ENCODE measurements at regions of chr5 and their contacts with region 1.

Region 1: GRCh38 chr5:43484106-43484849 is 613 bp upstream of the TMEM267 start:
- DNase-seq: peak; percentile 92
- ATAC-seq: peak; percentile 73
- H3K4me3 Mint-ChIP-seq: peak overlapping the region; percentile 97
- H3K27ac Mint-ChIP-seq: peak overlapping the region; percentile 100
- H3K4me1 Mint-ChIP-seq: peaks cover 37% of the 10 kb centered on the region
- H3K27me3 Mint-ChIP-seq: no peaks in the 10 kb centered on the region

Region 2: DNA sequence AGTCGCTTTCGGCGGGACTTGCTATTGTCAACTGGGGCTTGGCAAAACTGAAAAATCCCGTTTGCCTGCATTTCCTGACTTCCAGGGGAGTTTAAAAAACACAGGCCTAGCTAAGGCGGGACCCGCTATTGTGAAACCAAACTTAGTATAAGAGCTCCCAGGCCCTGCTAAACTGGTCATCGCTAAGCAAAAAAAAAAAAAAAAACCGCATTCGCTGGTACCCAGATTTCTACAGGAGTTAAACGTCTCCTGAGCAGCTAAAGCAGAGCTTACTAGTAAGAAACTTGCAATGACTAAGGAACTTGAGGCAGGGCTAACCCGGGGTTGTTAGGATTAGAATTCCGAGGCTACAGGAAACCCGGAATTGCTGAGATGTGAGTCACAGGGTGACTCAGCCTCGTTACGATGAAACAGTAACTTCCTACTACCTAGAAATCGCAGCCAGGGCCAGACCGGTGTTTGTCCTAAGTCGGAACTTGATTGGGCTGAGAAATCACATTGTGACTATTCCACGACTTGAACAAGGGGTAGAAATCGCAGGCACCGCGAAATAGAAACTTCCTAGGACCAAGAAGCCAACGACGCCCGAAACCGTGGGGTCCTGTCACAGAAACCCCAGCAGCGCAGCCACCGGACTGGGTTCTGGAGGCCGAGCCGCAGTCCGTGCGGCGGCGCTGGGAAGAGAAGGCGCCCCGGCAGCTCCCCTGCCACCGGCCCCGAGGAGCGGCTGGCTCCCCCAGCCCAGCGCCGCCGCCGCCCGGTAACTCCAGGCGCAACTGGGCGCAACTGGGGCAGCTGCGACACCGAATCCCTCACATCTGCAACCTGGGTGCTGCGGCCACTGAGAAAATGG is 533.6 kb before region 1 on chr5:
- CTCF ChIA-PET with region 1: interaction called, 3 read pairs
- POLR2A ChIA-PET with region 1: no interaction called
- intact Hi-C with region 1: loop called in 1 of 2 experiments (anchors 5 kb)
- DNase-seq: peak; percentile 82
- ATAC-seq: peak; percentile 59
- H3K4me3 Mint-ChIP-seq: peak overlapping the region; percentile 83
- H3K27ac Mint-ChIP-seq: peak overlapping the region; percentile 91
- H3K4me1 Mint-ChIP-seq: peaks cover 17% of the 10 kb centered on the region
- H3K27me3 Mint-ChIP-seq: no peaks in the 10 kb centered on the region

Region 3: DNA sequence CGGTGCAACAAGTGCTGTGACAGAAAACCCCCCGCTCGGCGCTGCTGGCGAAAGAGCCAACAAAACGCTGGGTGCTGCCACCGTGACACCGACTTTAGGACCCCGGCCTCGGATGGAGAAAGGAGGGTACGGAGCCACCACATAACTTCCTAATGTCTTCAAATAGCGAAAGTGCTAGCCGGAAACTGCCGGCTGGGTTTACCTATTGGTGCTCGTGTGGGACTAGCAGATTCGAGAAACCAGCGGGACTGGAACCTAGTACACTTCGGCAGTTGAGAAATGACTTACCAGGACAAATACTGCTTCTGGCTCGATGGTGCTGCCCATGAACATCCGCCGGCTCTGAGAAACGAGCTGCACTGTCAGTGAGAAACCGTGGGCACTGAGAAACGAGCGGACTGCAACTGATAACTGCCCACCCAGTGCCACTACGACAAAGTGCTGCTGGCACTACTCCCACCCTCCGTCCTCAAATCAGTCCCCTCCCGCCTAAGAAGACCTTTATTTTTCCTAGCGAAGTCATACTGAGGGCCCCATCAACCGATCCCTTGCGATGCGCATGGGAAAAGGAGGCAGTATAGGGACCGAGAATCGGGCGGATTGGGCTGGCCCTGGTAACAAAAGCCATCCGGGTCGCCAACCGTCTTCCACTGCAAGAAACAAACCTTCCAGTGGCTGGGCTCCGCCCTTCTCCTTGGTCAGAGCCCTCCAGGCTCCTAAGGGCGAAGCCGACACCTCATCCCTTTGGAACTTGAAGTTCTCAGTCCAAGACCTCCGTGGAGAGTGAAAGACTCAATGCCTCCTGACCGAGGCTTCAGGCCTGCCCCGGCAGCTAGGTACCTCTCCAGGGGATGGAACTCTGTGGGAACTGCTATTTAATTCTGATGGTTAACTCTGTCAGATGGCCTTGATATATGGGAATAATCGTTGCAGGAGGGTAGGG is 417.2 kb before region 1 on chr5:
- CTCF ChIA-PET with region 1: interaction called, 7 read pairs
- POLR2A ChIA-PET with region 1: interaction called, 7 read pairs
- intact Hi-C with region 1: loop called (anchors 1 to 2 kb)
- DNase-seq: peak; percentile 91
- ATAC-seq: peak; percentile 51
- H3K4me3 Mint-ChIP-seq: peak overlapping the region; percentile 97
- H3K27ac Mint-ChIP-seq: peak overlapping the region; percentile 99
- H3K4me1 Mint-ChIP-seq: peaks cover 37% of the 10 kb centered on the region
- H3K27me3 Mint-ChIP-seq: no peaks in the 10 kb centered on the region

Region 4: GRCh38 chr5:43120720-43121564 is 363.3 kb before region 1 on chr5 and contains the start of gene ZNF131:
- CTCF ChIA-PET with region 1: interaction called, 7 read pairs
- POLR2A ChIA-PET with region 1: interaction called, 10 read pairs
- intact Hi-C with region 1: loop called (anchors 1 to 10 kb)
- DNase-seq: peak; percentile 98
- ATAC-seq: peak; percentile 93
- H3K4me3 Mint-ChIP-seq: peak within 1 kb of the TSS; percentile 94
- H3K27ac Mint-ChIP-seq: peak within 1 kb of the TSS; percentile 94
- H3K4me1 Mint-ChIP-seq: peaks cover 35% of the 10 kb centered on the region
- H3K27me3 Mint-ChIP-seq: no peaks in the 10 kb centered on the region
- total RNA-seq, gene ZNF131: 30.9 to 33.4 TPM

Region 5: DNA sequence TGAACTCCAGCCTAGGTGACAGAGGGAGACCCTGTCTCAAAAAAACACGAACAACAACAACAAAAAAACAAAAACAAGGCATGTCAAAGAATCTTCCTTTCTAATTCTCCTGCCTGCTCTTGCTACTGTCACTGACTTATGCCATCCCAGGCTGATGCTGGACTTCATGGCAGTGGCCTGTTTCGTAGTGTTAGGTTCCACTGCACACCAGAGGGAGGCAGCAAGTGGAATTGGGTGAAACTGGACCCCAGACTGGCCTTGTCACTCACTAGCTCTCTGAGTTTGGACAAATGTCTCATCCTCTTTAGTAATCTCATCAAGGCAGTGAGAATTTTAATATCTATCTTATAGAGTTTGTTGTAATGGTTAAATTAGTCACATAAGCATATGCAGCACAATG is 279.3 kb before region 1 on chr5:
- CTCF ChIA-PET with region 1: no interaction called
- POLR2A ChIA-PET with region 1: no interaction called
- intact Hi-C with region 1: no loop called
- DNase-seq: no peak
- ATAC-seq: no peak
- H3K4me3 Mint-ChIP-seq: no peak overlapping the region
- H3K27ac Mint-ChIP-seq: no peak overlapping the region
- H3K4me1 Mint-ChIP-seq: no peaks in the 10 kb centered on the region
- H3K27me3 Mint-ChIP-seq: peaks cover 14% of the 10 kb centered on the region

Region 6: GRCh38 chr5:43396762-43397304 is 87.4 kb before region 1 on chr5:
- CTCF ChIA-PET with region 1: interaction called, 5 read pairs
- POLR2A ChIA-PET with region 1: interaction called, 4 read pairs
- intact Hi-C with region 1: loop called (anchors 1 to 2 kb)
- DNase-seq: peak; percentile 82
- ATAC-seq: peak; percentile 97
- H3K4me3 Mint-ChIP-seq: peak overlapping the region; percentile 84
- H3K27ac Mint-ChIP-seq: peak overlapping the region; percentile 96
- H3K4me1 Mint-ChIP-seq: peaks cover 26% of the 10 kb centered on the region
- H3K27me3 Mint-ChIP-seq: no peaks in the 10 kb centered on the region

Region 7: DNA sequence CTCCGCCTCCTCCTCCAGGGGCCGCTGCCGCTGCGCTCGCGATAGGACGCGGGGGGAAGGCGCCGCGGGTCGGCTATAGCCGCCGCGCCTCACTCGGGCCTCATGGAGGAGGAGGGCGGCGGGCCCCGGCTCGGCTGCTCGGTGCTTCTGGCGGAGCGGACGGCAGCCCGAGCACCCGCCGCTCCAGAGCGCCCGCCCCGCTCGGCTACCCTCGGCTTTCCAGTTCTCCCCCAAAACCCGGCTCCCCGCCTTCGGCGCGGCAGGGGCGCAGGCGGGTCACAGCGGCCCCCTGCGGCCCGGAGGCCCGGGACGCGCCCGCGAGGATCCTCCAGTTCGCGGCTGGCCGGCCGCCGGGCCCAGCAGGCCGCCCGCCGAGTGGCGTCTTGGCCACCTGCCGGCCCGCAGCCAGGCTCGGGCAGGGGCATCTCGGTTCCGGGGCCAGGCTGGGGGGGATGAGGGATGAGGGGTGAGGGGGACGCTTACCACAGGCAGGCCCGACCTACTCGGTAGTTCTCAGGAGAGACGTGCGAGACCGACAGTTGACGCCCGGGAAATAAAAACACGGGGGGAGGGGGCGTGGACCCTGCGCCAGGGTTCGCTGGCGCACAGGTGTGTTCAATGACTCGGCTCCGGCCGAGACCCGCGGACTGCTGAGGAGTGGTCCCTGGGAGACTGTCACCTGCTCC is 72.7 kb after region 1 on chr5 and contains the start of gene PAIP1:
- CTCF ChIA-PET with region 1: interaction called, 11 read pairs
- POLR2A ChIA-PET with region 1: interaction called, 17 read pairs
- intact Hi-C with region 1: loop called (anchors 1 kb)
- DNase-seq: peak; percentile 91
- ATAC-seq: peak; percentile 87
- H3K4me3 Mint-ChIP-seq: peak within 1 kb of the TSS; percentile 88
- H3K27ac Mint-ChIP-seq: peak within 1 kb of the TSS; percentile 99
- H3K4me1 Mint-ChIP-seq: peaks cover 18% of the 10 kb centered on the region
- H3K27me3 Mint-ChIP-seq: peaks cover 2% of the 10 kb centered on the region
- total RNA-seq, gene PAIP1: 51.7 to 55.1 TPM

Measured in activated CD4-positive, alpha-beta T cell treated with anti-CD3 and anti-CD28 coated beads for 36 hours (primary cell).